ENCODE measurements at regions of chr3 and their contacts with region 1.

Region 1: GRCh38 chr3:170414202-170414663 is 4.4 kb upstream of the CLDN11 start:
- DNase-seq: no peak
- H3K4me3 ChIP-seq: no peak overlapping the region
- H3K27ac ChIP-seq: no peak overlapping the region
- H3K4me1 ChIP-seq: peaks cover 3 to 15% (median 11%) of the 10 kb centered on the region in 4 donors
- H3K27me3 ChIP-seq: peaks cover 0 to 14% of the 10 kb centered on the region in 2 donors
- CTCF ChIP-seq: peak; percentile 81 to 85

Region 2: DNA sequence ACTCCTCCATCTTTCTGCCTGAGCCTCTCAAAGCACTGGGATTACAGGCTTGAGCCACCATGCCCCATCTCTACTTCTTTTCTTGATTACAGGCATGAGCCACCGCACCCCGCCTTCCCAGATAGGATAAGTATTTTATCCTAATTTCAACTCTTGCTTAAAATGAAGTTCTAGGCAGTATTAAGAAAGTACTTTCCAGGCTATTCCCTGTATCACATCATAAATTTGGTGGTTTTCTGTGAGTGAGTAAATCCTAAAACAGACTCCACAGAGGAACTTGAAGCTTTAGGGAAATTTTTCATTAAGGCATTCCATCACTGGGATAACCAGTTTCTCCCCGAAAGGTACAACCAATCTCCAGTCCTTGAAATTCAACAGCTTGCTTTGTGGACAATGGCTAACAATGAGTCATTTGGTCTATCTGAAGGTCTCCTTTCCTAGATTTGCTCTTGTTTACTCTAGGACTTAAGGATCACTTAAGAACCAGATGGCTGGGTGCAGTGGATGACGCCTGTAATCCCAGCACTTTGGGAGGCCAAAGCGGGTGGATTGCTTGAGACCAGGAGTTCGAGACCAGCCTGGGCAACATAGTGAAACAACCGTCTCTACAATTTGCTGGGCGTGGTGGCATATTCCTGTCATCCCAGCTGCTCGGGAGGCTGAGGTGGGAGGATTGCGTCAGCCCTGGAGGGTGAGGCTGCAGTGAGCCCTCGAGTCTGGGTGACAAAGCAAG is 106.4 kb before region 1 on chr3:
- intact Hi-C with region 1: loop called (anchors 5 kb)
- DNase-seq: no peak
- H3K4me3 ChIP-seq: no peak overlapping the region
- H3K27ac ChIP-seq: no peak overlapping the region
- H3K4me1 ChIP-seq: peaks cover 0 to 4% (median 0%) of the 10 kb centered on the region in 4 donors
- H3K27me3 ChIP-seq: no peaks in the 10 kb centered on the region
- CTCF ChIP-seq: no peak

Region 3: DNA sequence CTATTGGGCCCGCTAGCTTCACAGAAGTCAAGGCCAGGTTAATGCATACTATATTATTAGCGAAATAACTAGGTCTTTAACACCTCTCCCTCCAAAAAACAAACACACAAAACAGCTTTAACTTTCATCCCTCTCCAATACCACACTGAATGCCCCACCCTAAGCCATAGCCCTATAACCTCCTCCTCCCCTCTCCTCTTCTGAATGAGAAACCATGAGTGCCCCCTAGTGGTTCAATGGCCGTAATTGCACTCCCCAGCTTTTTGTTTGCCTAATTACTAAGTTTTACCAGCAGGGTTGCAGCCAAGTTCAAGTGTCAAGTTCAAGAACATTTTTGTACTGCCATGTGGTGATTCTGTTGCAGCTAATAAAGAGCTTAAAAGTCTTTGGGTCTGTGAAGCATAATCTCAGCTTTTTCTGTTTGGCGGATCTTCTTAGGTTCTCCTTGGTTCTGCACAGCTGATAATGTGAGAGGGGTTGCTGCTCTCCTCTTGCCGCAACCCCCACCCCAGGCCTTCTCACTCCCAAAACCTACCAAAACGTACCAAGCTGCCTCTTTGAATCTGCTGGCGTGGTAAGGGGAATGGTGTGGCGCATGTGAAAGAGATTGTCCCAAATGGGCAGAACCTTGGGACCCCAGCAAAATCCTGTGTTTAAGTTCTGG is 397.8 kb after region 1 on chr3:
- intact Hi-C with region 1: loop called (anchors 5 kb)
- DNase-seq: peak; percentile 73 to 77
- H3K4me3 ChIP-seq: no peak overlapping the region
- H3K27ac ChIP-seq: no peak overlapping the region
- H3K4me1 ChIP-seq: peaks cover 0 to 15% (median 5%) of the 10 kb centered on the region in 4 donors
- H3K27me3 ChIP-seq: no peaks in the 10 kb centered on the region
- CTCF ChIP-seq: peak; percentile 88 to 93

Measured in tibial artery (tissue), 4 donors.